Adrenal gland (tissue), 19 donors: ENCODE measurements at regions of chr7 and their contacts with region 1.

Region 1: DNA sequence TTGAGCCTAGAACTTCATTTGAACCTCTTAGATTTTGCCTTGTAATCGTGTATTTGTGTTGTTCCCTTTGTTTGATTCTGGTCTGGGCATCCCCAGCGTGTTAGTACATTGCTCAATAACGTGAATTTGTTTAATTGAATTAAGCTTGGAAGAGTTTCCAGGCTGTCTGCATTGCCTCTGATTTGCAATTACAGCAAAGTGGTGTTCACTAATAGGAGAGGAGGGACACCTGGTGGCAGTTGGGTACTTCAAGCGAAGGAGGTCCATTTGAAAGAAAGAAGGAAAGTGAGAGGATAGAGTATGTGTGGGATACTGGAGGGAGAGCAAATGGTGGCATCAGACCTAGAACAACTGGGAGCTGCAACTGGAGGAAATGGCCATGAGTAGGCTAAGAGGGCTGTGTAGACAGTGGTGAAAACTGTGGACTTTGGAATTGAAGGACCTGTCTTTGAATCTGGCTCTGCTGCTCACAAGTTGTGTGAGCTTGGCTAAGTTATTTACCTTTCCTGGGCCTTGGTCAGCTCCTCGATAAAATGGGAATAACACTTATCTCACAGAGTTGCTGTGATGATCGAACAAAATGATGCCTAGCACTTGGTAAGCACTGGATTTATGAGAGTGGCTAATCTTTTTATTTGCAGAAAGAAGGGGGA is 15.1 kb downstream of the LSMEM1 start:
- DNase-seq: peak; percentile 58 to 86 (median 72)
- H3K4me3 ChIP-seq: no peak overlapping the region
- H3K27ac ChIP-seq: no peak overlapping the region
- H3K4me1 ChIP-seq: no peaks in the 10 kb centered on the region
- H3K27me3 ChIP-seq: no peaks in the 10 kb centered on the region
- CTCF ChIP-seq: peak; percentile 51 to 85 (median 76)
- POLR2A ChIP-seq: no peak

Region 2: DNA sequence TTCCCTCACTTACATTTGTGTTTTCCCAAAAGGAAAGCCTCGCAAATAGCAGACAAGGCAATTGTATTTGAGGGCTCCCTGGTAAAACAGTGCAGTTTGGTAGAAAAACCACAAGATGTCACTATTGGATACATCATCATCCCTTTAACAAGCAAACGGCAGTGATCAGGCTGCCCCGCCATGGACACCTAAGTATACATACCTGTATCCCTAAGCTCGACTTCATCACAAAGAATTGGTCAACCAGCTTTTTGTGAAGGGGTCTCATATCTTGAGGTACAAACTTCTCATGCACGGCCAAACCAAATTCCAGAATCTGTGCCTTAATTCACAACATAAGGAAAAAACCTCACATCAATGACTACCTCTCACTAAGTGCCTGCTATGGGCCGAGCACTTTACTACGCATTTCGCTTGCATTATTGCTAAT is 754.1 kb before region 1 on chr7:
- intact Hi-C with region 1: loop called in 1 of 2 experiments (anchors 5 kb)
- DNase-seq: peak in 6 of 7 donors; percentile 30 to 70 (median 52)
- H3K4me3 ChIP-seq: no peak overlapping the region
- H3K27ac ChIP-seq: no peak overlapping the region
- H3K4me1 ChIP-seq: no peaks in the 10 kb centered on the region
- H3K27me3 ChIP-seq: no peaks in the 10 kb centered on the region
- CTCF ChIP-seq: peak; percentile 40 to 71 (median 64)
- POLR2A ChIP-seq: no peak

Region 3: DNA sequence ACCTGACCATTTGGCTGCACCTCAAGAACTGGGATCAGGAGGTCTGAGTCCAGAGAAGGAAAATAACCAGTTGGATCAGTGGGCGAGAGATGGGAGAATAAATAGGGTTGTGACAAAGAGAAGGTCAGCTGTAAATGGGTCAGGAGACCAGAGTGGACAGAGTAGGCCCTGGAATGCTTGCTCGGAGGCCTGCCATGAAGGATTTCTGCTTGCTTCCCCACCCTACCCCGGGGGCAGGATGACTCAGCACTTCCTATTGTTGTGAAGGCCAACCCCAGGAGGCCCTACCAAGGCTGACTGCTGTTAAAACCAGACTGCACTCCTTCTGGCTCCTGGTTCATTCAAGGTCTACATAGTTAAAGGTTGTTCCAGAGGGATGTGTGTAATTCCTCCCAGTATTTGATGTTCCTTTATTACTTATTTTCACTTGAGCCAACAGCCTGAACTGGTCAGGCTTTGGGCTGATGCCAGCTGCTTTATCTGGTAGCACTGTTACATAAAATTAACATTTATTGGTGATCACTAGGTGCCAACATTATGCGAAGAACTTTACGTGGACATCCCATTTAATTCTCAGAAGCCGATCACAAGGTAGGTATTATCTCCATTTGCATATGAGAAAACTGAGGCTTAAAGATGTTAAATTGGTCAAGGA is 73.0 kb before region 1 on chr7:
- intact Hi-C with region 1: loop called in 1 of 2 experiments (anchors 10 kb)
- DNase-seq: peak; percentile 80 to 95 (median 91)
- H3K4me3 ChIP-seq: no peak overlapping the region
- H3K27ac ChIP-seq: peak overlapping the region in 3 of 5 donors; percentile 55 to 70 (median 57)
- H3K4me1 ChIP-seq: peaks cover 12 to 17% of the 10 kb centered on the region in 2 donors
- H3K27me3 ChIP-seq: no peaks in the 10 kb centered on the region
- CTCF ChIP-seq: no peak
- POLR2A ChIP-seq: peak in 1 of 2 donors; percentile 33